ENCODE measurements at regions of chr21 and their contacts with region 1.

Region 1: DNA sequence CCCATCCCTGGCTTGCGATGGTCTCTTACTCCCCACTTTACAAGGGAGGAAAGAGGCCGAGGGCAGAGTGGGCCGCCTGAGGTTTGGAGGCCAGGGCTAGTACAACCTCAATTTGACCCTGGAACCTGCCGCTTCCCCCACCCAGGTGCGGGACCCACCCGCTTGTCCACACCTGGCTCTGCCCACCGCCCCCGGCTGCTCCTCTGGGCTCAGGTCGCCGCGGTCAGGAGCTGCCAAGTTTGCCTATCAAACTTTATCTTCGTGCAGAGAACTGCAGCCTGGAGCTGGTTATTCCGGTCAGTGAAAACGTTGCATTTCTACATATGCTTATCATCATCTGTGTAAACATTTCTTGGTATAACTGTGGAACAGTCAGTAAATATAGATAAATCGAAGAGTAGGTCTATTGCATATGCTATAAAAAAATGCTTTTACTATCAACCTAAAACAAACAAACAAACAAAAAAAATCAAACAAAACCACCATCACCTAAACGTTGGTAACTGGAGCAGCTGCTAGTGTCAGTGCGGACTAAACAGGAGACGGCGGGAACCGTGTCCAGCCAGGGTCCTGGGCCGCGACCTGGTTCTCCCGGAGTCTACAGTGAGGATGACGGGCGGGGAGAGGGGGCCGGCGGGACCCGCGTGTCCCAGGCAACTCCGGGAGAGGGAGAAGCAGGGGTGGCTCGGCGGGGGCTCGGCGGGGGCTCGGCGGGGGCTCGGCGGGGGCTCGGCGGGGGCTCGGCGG is 906 bp upstream of the ADARB1 start:
- DNase-seq: peak; percentile 74 to 79
- H3K4me3 ChIP-seq: peak overlapping the region; percentile 37; the same call in 1 of the 2 replicates
- H3K27ac ChIP-seq: peak overlapping the region; percentile 66
- H3K4me1 ChIP-seq: peaks cover 6% of the 10 kb centered on the region; the same call in 1 of the 2 replicates
- H3K27me3 ChIP-seq: no peaks in the 10 kb centered on the region
- CTCF ChIP-seq: no peak

Region 2: GRCh38 chr21:44958471-44959191 is 114.8 kb before region 1 on chr21:
- CTCF ChIA-PET with region 1: no interaction called
- POLR2A ChIA-PET with region 1: interaction called, 12 read pairs
- intact Hi-C with region 1: no loop called
- DNase-seq: peak in 1 of 2 experiments; percentile 49
- H3K4me3 ChIP-seq: no peak overlapping the region
- H3K27ac ChIP-seq: no peak overlapping the region
- H3K4me1 ChIP-seq: no peaks in the 10 kb centered on the region
- H3K27me3 ChIP-seq: no peaks in the 10 kb centered on the region
- CTCF ChIP-seq: no peak

Measured in PC-9 (cell line).